ENCODE measurements at regions of chr10 and their contacts with region 1.

Region 1: GRCh38 chr10:69408318-69409175 is 8.2 kb downstream of the TACR2 start:
- DNase-seq: peak; percentile 81
- H3K4me3 Mint-ChIP-seq: peak overlapping the region; percentile 79
- H3K27ac Mint-ChIP-seq: peak overlapping the region; percentile 82
- H3K4me1 Mint-ChIP-seq: peaks cover 24% of the 10 kb centered on the region
- H3K27me3 Mint-ChIP-seq: no peaks in the 10 kb centered on the region

Region 2: GRCh38 chr10:68988530-68989316 is 419.8 kb before region 1 on chr10 and contains the start of gene KIFBP:
- intact Hi-C with region 1: loop called (anchors 2 kb)
- DNase-seq: peak; percentile 84
- H3K4me3 Mint-ChIP-seq: peak within 1 kb of the TSS; percentile 93
- H3K27ac Mint-ChIP-seq: peak within 1 kb of the TSS; percentile 87
- H3K4me1 Mint-ChIP-seq: peaks cover 34% of the 10 kb centered on the region
- H3K27me3 Mint-ChIP-seq: no peaks in the 10 kb centered on the region
- total RNA-seq, gene KIFBP: 16.4 and 16.9 TPM in 2 replicates

Region 3: GRCh38 chr10:69123747-69124562 is 284.6 kb before region 1 on chr10 and contains the start of gene VPS26A:
- intact Hi-C with region 1: loop called (anchors 1 kb)
- DNase-seq: peak; percentile 99
- H3K4me3 Mint-ChIP-seq: peak within 1 kb of the TSS; percentile 87
- H3K27ac Mint-ChIP-seq: peak within 1 kb of the TSS; percentile 88
- H3K4me1 Mint-ChIP-seq: peaks cover 21% of the 10 kb centered on the region
- H3K27me3 Mint-ChIP-seq: no peaks in the 10 kb centered on the region
- total RNA-seq, gene VPS26A: 24.7 and 24.8 TPM in 2 replicates

Region 4: GRCh38 chr10:69318106-69318866 is 90.3 kb before region 1 on chr10:
- intact Hi-C with region 1: loop called (anchors 1 kb)
- DNase-seq: peak; percentile 91
- H3K4me3 Mint-ChIP-seq: peak overlapping the region; percentile 99
- H3K27ac Mint-ChIP-seq: peak overlapping the region; percentile 98
- H3K4me1 Mint-ChIP-seq: peaks cover 50% of the 10 kb centered on the region
- H3K27me3 Mint-ChIP-seq: peaks cover 8% of the 10 kb centered on the region

Region 5: GRCh38 chr10:69425511-69426298 is 17.2 kb after region 1 on chr10:
- intact Hi-C with region 1: loop called (anchors 1 kb)
- DNase-seq: no peak
- H3K4me3 Mint-ChIP-seq: no peak overlapping the region
- H3K27ac Mint-ChIP-seq: no peak overlapping the region
- H3K4me1 Mint-ChIP-seq: peaks cover 37% of the 10 kb centered on the region
- H3K27me3 Mint-ChIP-seq: peaks cover 2% of the 10 kb centered on the region

Region 6: DNA sequence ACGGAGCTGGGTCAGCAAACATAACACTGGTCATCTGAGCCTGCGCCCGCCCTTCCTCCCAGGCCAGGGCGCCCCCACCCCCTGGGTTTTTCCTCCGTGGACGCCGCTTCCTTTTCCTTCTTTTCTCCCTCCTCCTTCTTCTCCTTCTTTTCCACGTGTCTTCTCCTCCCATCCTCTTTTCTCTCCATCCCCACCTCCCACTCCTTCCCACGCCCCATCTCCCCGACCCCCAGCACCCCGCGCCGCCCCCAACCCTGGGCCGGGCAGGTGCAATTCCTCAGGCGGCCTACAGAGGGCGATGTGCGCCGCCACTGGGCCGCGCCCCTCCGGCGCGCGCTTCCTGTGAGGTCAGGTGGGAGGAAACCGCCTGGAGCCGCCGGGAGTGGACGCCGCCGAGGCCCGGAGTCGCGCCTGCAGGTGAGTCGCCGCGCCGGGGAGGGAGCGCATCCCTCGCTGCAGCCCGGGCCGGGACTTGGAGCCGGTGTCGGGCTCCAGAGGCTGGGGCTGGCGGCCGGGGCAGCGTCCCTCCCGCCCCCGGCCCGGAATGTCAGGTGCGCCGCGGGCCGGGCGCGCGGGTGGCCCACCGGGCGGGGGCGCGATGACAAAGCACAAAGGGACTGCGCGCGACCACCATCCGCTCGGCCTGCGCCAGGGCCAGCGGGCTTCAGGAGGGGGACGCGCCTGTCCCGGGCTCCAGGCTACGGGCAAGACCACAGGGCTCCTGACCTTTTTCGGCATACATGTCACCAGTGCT is 221.5 kb after region 1 on chr10 and contains the start of gene FAM241B:
- intact Hi-C with region 1: loop called (anchors 2 kb)
- DNase-seq: peak; percentile 75
- H3K4me3 Mint-ChIP-seq: peak within 1 kb of the TSS; percentile 74
- H3K27ac Mint-ChIP-seq: peak within 1 kb of the TSS; percentile 9
- H3K4me1 Mint-ChIP-seq: no peaks in the 10 kb centered on the region
- H3K27me3 Mint-ChIP-seq: no peaks in the 10 kb centered on the region
- total RNA-seq, gene FAM241B: 10.2 and 10.9 TPM in 2 replicates

Measured in activated T-helper 1 cell treated with anti-CD3 and anti-CD28 coated beads, Interleukin-12 subunit alpha, Interleukin-12 subunit beta, Interleukin-2, Interleukin-4 antibody, amounts not matched to agents 30 ng/mL and 10 ng/mL and 1 ng/mL, durations not matched to agents 14 hours and 24 hours and 36 hours (primary cell).